ENCODE measurements at regions of chr16 and their contacts with region 1.

Region 1: DNA sequence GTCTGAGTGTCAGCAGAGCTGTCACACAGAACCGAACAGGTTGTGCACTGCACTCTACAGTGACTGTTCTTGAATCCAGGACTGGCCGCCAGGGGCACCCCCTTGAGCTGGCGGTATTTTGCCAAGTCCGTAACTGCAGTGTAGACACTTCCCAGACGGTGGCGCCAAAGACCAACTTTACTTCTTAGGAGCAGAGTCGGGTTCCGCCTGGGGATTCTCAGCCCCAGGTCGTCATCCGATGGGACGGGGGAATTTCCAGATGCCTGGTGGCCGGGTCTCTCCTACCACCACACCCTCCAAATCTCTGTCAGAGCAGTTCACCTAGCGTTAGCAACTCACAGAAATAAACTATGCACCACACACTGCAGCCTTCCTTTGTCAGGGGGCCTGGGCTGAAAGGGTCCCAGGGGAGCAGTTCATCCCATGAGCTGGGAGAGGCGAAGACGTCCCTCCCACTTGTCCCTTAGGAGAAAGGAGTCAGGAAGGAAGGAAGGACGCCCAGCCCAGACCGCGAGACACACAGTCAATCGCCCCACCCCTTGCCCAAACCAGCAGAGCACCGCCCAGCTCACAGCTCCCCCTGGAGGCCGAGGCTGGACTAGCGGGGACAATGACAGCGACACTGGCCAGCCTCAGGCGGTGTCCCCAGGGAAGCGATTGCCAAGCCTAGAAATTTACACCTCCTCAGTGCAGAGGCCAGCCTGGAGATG is 7.4 kb upstream of the RIPOR1 start:
- DNase-seq: peak; percentile 99
- H3K4me3 Mint-ChIP-seq: peak overlapping the region; percentile 82
- H3K27ac Mint-ChIP-seq: peak overlapping the region; percentile 95
- H3K4me1 Mint-ChIP-seq: peaks cover 8% of the 10 kb centered on the region
- H3K27me3 Mint-ChIP-seq: no peaks in the 10 kb centered on the region

Region 2: DNA sequence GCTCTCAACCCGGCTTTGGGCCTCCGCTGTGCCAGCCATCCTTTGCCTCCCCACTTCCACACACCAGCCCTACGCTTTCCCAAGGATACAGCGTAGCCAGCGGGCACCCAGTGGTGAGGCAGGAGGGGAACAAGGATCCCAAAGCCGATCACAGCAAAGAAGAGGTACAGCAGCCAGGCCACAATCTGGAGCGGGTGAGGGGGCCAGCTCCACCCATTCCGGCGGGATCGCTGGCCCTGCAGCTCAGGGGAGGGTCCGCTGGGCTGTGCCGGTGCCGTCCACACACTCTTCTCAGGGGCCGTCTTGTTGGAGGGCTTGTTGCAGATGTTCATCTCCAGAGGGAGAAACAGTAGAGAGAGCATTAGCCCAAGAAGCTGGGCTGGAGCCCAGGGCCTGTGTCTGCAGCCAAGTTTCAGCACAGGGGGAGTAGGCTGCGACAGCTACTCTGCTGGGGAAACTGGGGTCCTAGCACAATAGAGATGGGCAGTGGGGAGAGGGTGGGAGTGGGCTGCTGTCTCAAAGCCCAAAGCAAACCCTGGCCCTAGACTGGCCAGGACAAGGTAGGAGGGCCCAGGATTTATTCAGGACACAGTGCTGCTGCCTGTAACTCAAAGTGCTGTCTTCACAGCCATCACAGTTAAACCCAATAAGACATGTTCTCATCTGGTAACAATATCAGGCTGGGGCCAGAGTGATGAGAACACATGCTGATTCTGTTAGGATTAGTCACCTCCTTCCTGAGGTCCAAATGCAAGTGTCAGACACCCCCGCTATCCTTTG is 114.9 kb before region 1 on chr16:
- CTCF ChIA-PET with region 1: no interaction called
- POLR2A ChIA-PET with region 1: no interaction called
- intact Hi-C with region 1: no loop called
- DNase-seq: no peak
- H3K4me3 Mint-ChIP-seq: no peak overlapping the region
- H3K27ac Mint-ChIP-seq: no peak overlapping the region
- H3K4me1 Mint-ChIP-seq: no peaks in the 10 kb centered on the region
- H3K27me3 Mint-ChIP-seq: peaks cover 9% of the 10 kb centered on the region

Region 3: DNA sequence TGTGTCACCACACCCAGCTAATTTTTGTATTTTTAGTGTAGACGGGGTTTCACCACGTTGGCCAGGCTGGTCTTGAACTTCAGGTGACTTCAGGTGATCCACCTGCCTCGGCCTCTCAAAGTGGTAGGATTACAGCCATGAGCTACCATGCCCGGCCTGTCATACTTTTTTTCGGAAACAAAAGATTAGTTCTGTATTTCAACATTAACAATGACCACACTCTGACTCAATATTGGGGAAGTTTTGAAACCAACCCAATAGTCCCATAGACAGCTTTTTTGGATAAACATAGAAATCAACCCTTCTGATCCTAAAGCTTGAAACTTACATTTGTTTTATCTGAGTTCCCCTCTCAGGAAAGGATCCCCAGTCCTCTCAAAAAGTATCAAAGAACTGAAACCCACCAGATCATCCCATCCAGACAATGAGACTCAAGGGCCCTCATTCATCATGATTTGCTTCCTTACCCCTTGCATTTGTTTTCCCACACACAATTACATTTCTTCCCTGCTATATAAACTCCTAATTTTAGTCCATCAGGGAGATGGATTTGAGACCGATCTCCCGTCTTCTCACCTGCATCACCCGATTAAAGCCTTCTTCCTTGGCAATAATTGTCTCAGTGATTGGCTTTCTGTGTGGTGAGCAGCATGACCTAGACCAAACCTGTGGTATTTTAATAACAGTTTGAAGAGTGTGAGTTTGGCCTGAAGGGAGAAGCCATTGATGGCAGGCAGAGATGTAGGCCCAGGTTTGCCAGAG is 30.7 kb before region 1 on chr16:
- CTCF ChIA-PET with region 1: interaction called, 128 read pairs
- POLR2A ChIA-PET with region 1: no interaction called
- intact Hi-C with region 1: no loop called
- DNase-seq: no peak
- H3K4me3 Mint-ChIP-seq: no peak overlapping the region
- H3K27ac Mint-ChIP-seq: no peak overlapping the region
- H3K4me1 Mint-ChIP-seq: no peaks in the 10 kb centered on the region
- H3K27me3 Mint-ChIP-seq: no peaks in the 10 kb centered on the region

Region 4: GRCh38 chr16:67537270-67537635 is 16.0 kb after region 1 on chr16:
- CTCF ChIA-PET with region 1: interaction called, 106 read pairs
- POLR2A ChIA-PET with region 1: interaction called, 9 read pairs
- intact Hi-C with region 1: no loop called
- DNase-seq: peak; percentile 74
- H3K4me3 Mint-ChIP-seq: peak overlapping the region; percentile 76
- H3K27ac Mint-ChIP-seq: peak overlapping the region; percentile 26
- H3K4me1 Mint-ChIP-seq: peaks cover 15% of the 10 kb centered on the region
- H3K27me3 Mint-ChIP-seq: no peaks in the 10 kb centered on the region

Region 5: GRCh38 chr16:67561824-67562525 is 40.7 kb after region 1 on chr16:
- CTCF ChIA-PET with region 1: interaction called, 51 read pairs
- POLR2A ChIA-PET with region 1: interaction called, 5 read pairs
- intact Hi-C with region 1: loop called (anchors 1 kb)
- DNase-seq: peak; percentile 99
- H3K4me3 Mint-ChIP-seq: peak overlapping the region; percentile 88
- H3K27ac Mint-ChIP-seq: peak overlapping the region; percentile 92
- H3K4me1 Mint-ChIP-seq: peaks cover 43% of the 10 kb centered on the region
- H3K27me3 Mint-ChIP-seq: no peaks in the 10 kb centered on the region

Region 6: DNA sequence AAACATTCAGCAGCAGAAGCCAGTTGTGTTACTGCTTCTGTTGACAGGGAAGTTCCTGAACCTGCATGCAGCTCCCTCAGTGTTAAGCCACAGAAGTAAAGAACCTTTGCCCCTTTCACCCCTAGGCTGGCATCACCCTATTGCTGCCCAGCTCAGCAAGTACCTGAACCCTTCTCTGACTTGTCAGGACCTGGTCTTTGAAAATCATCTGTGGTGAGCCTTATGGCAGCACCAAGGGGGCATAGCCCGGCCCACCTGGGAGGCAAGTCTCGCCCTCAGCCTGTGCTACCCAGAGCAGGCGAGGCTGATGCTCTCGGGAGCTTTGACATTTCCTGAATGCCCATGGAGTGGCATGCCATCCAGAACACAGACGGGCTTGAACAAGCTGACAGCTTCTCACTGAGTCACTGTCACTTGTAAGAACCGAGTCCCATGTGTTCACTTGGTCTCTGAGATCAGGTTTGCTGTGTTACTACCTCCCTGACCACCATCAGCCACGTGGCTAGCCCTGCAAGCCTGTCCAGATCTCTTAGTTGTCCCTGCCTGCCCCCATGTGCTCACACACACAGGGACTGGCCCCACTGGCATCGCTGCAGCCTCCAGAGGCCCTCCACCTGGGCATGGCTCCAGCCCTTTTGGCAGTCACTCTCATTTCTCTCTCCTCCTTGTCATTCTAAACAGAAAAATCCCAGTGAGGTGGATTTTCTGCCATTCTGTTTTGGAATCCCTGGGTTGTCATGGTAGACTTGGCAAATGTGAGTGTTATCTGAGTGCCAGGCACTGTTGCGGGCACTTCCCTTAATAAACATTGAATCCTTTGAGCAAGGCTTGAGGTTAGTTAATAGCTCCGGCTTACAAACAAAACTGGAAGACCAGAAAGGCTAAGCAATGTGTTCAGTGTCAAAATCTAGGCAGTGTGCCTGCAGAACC is 120.8 kb after region 1 on chr16:
- CTCF ChIA-PET with region 1: interaction called, 92 read pairs
- POLR2A ChIA-PET with region 1: interaction called, 8 read pairs
- intact Hi-C with region 1: loop called (anchors 1 kb)
- DNase-seq: no peak
- H3K4me3 Mint-ChIP-seq: no peak overlapping the region
- H3K27ac Mint-ChIP-seq: no peak overlapping the region
- H3K4me1 Mint-ChIP-seq: peaks cover 11% of the 10 kb centered on the region
- H3K27me3 Mint-ChIP-seq: no peaks in the 10 kb centered on the region

Region 7: GRCh38 chr16:67672739-67673662 is 151.8 kb after region 1 on chr16:
- CTCF ChIA-PET with region 1: interaction called, 91 read pairs
- POLR2A ChIA-PET with region 1: interaction called, 4 read pairs
- intact Hi-C with region 1: loop called (anchors 1 kb)
- DNase-seq: peak; percentile 68
- H3K4me3 Mint-ChIP-seq: no peak overlapping the region
- H3K27ac Mint-ChIP-seq: no peak overlapping the region
- H3K4me1 Mint-ChIP-seq: no peaks in the 10 kb centered on the region
- H3K27me3 Mint-ChIP-seq: no peaks in the 10 kb centered on the region

Region 8: DNA sequence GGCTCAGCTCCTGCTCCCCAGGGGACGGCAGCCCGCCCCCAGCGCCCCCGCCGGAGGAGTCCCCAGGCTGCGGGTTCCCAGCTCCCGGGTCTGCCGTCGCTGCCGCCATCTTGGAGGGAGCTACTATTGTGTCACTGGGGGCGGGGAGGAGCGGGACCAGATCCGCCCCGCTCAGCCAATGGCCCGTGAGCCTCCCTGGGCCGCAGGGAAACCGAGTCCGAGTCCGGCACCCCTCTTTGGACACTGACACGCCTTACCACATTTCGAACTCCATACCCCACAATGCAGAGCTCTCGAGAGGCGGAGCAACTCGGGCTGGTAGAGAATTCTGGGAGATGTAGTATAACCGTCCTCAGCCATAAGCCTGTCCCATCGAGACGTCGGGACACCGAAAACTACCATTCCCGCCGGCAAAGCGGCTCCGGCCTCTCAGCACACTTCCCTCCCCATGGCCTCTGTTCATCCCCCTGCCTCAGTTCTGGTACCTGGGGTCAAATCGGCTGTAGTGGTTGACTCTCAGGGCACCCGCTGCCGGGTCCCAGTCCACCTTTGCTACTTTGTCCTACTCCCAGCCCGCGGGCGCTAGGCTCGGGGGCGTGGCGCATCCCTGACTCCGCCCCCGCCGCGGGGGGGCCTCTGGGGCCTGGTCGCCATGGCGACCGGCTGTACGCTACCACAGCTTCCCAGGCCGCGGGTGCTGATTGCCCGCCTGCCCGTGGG is 285.3 kb after region 1 on chr16 and contains the starts of genes RANBP10 and TSNAXIP1:
- CTCF ChIA-PET with region 1: interaction called, 8 read pairs
- POLR2A ChIA-PET with region 1: interaction called, 4 read pairs
- intact Hi-C with region 1: loop called (anchors 10 kb)
- DNase-seq: peak; percentile 98
- H3K4me3 Mint-ChIP-seq: peak within 1 kb of the TSS; percentile 93
- H3K27ac Mint-ChIP-seq: peak within 1 kb of the TSS; percentile 91
- H3K4me1 Mint-ChIP-seq: peaks cover 39% of the 10 kb centered on the region
- H3K27me3 Mint-ChIP-seq: no peaks in the 10 kb centered on the region
- total RNA-seq, gene RANBP10: 14.9 to 18.1 TPM
- total RNA-seq, gene TSNAXIP1: 0.77 to 0.81 TPM

Measured in activated CD4-positive, alpha-beta memory T cell treated with anti-CD3 and anti-CD28 coated beads for 36 hours (primary cell).